ENCODE measurements at regions of chr18 and their contacts with region 1.

Region 1: GRCh38 chr18:3623769-3624545 is 174.0 kb downstream of the TGIF1 start:
- DNase-seq: peak; percentile 64
- H3K4me3 Mint-ChIP-seq: peak overlapping the region; percentile 58
- H3K27ac Mint-ChIP-seq: peak overlapping the region; percentile 88
- H3K4me1 Mint-ChIP-seq: peaks cover 40% of the 10 kb centered on the region
- H3K27me3 Mint-ChIP-seq: no peaks in the 10 kb centered on the region

Region 2: GRCh38 chr18:3560755-3561154 is 63.2 kb before region 1 on chr18:
- CTCF ChIA-PET with region 1: no interaction called
- POLR2A ChIA-PET with region 1: no interaction called
- intact Hi-C with region 1: no loop called
- DNase-seq: no peak
- H3K4me3 Mint-ChIP-seq: no peak overlapping the region
- H3K27ac Mint-ChIP-seq: no peak overlapping the region
- H3K4me1 Mint-ChIP-seq: no peaks in the 10 kb centered on the region
- H3K27me3 Mint-ChIP-seq: no peaks in the 10 kb centered on the region

Region 3: DNA sequence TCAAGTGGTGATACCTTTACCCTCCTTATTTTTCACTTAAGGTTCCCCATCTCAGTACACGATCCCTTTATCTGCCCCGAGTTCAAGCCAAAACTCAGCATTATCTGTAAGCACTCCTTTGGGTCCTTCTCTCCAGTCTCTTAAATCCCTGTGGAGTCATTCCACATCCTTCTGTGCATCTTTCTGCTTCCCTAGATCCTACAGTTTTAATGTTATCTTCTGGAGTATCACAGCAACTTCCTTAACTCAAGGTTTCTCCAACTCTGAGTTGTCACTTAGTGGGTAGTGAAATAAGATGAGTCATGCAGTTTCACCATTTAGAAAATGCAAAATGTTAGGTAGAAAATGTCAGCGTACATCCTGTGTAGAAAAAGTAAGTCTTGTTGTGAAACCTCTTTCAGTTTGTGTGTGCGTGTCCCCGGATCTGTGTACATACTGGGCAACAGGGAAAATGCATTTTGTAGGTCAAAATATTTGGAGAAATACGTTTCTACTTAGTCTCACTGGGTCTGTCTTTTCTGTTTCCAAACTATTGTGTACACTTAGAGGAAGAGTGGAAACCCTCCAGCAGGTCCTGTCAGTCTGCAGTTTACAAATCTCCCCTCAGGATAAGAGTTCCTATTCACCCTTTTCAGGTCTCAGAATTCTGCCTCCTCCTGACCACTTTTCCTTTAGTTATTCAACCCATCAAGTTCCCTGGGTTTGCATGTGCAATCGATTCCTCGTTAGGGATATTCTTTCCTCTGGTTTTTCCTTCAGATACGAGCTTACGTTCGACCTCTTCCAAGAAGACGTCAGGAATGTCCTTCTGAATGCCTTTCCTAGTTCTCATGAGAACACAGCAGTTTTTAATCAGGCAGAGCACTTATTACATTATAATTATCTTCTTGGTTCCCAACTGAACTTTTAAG is 19.2 kb before region 1 on chr18:
- CTCF ChIA-PET with region 1: interaction called, 6 read pairs
- POLR2A ChIA-PET with region 1: interaction called, 7 read pairs
- intact Hi-C with region 1: loop called (anchors 1 kb)
- DNase-seq: peak; percentile 58
- H3K4me3 Mint-ChIP-seq: no peak overlapping the region
- H3K27ac Mint-ChIP-seq: no peak overlapping the region
- H3K4me1 Mint-ChIP-seq: peaks cover 15% of the 10 kb centered on the region
- H3K27me3 Mint-ChIP-seq: no peaks in the 10 kb centered on the region

Region 4: GRCh38 chr18:3652380-3653262 is 28.7 kb after region 1 on chr18:
- CTCF ChIA-PET with region 1: interaction called, 3 read pairs
- POLR2A ChIA-PET with region 1: no interaction called
- intact Hi-C with region 1: loop called (anchors 1 kb)
- DNase-seq: peak; percentile 88
- H3K4me3 Mint-ChIP-seq: peak overlapping the region; percentile 9
- H3K27ac Mint-ChIP-seq: peak overlapping the region; percentile 83
- H3K4me1 Mint-ChIP-seq: peaks cover 34% of the 10 kb centered on the region
- H3K27me3 Mint-ChIP-seq: no peaks in the 10 kb centered on the region

Region 5: GRCh38 chr18:3675446-3675845 is 51.5 kb after region 1 on chr18:
- CTCF ChIA-PET with region 1: no interaction called
- POLR2A ChIA-PET with region 1: no interaction called
- intact Hi-C with region 1: no loop called
- DNase-seq: no peak
- H3K4me3 Mint-ChIP-seq: no peak overlapping the region
- H3K27ac Mint-ChIP-seq: no peak overlapping the region
- H3K4me1 Mint-ChIP-seq: no peaks in the 10 kb centered on the region
- H3K27me3 Mint-ChIP-seq: peaks cover 13% of the 10 kb centered on the region

Measured in activated CD4-positive, alpha-beta memory T cell treated with anti-CD3 and anti-CD28 coated beads for 36 hours (primary cell).